ENCODE measurements at regions of chr17 and their contacts with region 1.

Region 1: GRCh38 chr17:8991514-8992285 is 26.2 kb upstream of the PIK3R5 start:
- DNase-seq: peak; percentile 38 to 59 (median 46)
- ATAC-seq: peak; percentile 76
- H3K4me3 ChIP-seq: no peak overlapping the region
- H3K27ac ChIP-seq: no peak overlapping the region
- H3K4me1 ChIP-seq: no peaks in the 10 kb centered on the region
- H3K27me3 ChIP-seq: no peaks in the 10 kb centered on the region
- CTCF ChIP-seq: peak; percentile 68 to 85 (median 69)
- EP300 ChIP-seq: no peak
- POLR2A ChIP-seq: no peak
- RAD21 ChIP-seq: peak in 1 of 2 experiments; percentile 44; a peak in 2 of 4 replicates

Region 2: GRCh38 chr17:8894673-8895578 is 96.8 kb before region 1 on chr17:
- CTCF ChIA-PET with region 1: no interaction called
- POLR2A ChIA-PET with region 1: no interaction called
- in situ Hi-C with region 1: no loop called
- intact Hi-C with region 1: loop called (anchors 10 kb)
- DNase-seq: peak; percentile 55 to 65 (median 64)
- ATAC-seq: peak; percentile 93
- H3K4me3 ChIP-seq: no peak overlapping the region
- H3K27ac ChIP-seq: no peak overlapping the region
- H3K4me1 ChIP-seq: no peaks in the 10 kb centered on the region; a peak in 2 of 5 replicates
- H3K27me3 ChIP-seq: peaks cover 2 to 19% of the 10 kb centered on the region in 2 experiments; a peak in 2 of 5 replicates
- CTCF ChIP-seq: peak; percentile 61 to 71 (median 68)
- EP300 ChIP-seq: no peak
- POLR2A ChIP-seq: no peak
- RAD21 ChIP-seq: peak; percentile 59 to 68

Region 3: DNA sequence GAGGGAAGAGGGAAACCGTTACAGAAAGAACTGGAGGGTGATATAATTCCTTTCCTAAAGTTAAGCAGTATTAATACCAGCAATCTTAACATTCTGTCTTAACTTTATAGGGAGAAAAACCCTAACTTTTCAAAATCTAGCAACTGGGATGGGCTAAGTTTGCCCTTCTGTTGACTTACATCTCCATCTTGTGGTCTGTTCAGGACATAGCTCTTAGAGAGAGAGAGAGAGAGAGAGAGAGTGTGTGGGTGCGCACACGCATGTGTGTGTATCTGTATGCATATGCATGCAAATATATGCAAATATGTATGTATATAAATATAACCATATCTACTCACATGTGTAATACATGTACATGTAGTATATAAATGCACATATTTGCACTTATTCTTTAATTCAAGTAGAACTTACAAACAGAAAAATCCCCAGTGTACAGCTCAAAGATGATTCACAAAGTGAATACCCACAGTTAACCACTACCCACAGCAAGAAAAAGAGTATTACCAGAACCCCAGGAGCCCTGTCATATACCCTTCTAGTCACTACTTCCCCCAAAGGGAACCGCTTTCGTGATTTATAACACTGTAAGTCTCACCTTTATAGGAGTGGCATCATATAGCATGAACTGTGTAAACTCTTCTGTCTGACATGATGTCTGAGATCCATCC is 537.5 kb after region 1 on chr17:
- CTCF ChIA-PET with region 1: no interaction called
- POLR2A ChIA-PET with region 1: no interaction called
- in situ Hi-C with region 1: loop called (anchors 25 kb)
- intact Hi-C with region 1: loop called (anchors 5 kb)
- DNase-seq: peak; percentile 9 to 19 (median 17)
- ATAC-seq: peak; percentile 78
- H3K4me3 ChIP-seq: no peak overlapping the region
- H3K27ac ChIP-seq: no peak overlapping the region
- H3K4me1 ChIP-seq: no peaks in the 10 kb centered on the region
- H3K27me3 ChIP-seq: no peaks in the 10 kb centered on the region; a peak in 1 of 5 replicates
- CTCF ChIP-seq: peak; percentile 33 to 68 (median 49); a peak in 5 of 6 replicates
- EP300 ChIP-seq: no peak
- POLR2A ChIP-seq: no peak
- RAD21 ChIP-seq: peak; percentile 24 to 59; a peak in 2 of 4 replicates

Region 4: GRCh38 chr17:9557161-9557755 is 565.6 kb after region 1 on chr17:
- CTCF ChIA-PET with region 1: no interaction called
- POLR2A ChIA-PET with region 1: no interaction called
- in situ Hi-C with region 1: no loop called
- intact Hi-C with region 1: loop called (anchors 10 kb)
- DNase-seq: no peak
- ATAC-seq: no peak
- H3K4me3 ChIP-seq: no peak overlapping the region
- H3K27ac ChIP-seq: no peak overlapping the region
- H3K4me1 ChIP-seq: no peaks in the 10 kb centered on the region
- H3K27me3 ChIP-seq: no peaks in the 10 kb centered on the region
- CTCF ChIP-seq: no peak
- EP300 ChIP-seq: no peak
- POLR2A ChIP-seq: no peak
- RAD21 ChIP-seq: no peak